K562 (cell line): ENCODE measurements at regions of chr2 and their contacts with region 1.

Region 1: DNA sequence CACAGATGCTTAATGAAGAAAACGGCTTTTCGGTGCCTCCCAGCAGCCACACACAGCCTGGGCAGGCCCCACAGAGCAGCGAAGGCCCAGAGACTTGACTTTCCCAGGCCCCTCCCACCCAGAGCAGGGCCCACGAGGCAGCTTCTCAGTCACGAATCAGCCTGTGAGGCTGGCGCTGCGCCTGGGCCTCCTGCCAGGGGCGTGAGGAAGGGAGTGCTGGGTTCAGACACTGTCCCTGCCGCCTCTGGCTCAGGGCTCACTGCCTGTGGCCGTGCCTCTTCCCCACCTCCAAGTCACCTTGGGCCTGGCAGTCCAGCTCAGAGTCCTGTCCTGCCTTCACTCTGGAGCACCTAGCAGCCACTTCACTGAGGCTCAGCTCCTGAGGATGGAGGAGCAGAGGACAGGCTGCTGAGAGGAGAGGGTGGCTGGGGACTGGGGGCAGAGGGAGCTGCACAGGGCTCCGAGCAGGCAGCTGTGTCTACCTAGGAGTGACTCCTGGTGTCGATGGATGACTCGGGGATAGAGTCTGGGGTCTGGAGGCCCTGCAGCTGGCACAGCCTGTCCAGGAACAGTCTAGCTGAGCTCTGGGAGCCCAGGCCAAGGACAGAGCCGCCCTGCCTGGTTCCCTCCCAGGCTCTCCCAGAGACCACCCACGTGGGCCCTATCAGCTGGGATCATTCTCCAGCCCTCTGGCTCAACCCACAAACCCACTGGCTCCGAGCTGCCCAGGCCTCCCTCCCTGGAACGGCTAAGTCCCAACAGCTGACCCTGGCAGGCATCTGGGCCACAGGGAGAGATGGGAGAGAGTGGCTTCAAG is 36.4 kb upstream of the FOSL2 start:
- DNase-seq: peak; percentile 58 to 67 (median 61)
- ATAC-seq: peak; percentile 40
- H3K4me3 ChIP-seq: no peak overlapping the region
- H3K27ac ChIP-seq: peak overlapping the region; percentile 62; the same call in 2 of the 3 replicates
- H3K4me1 ChIP-seq: peaks cover 57 to 66% of the 10 kb centered on the region in 2 experiments
- H3K27me3 ChIP-seq: no peaks in the 10 kb centered on the region
- CTCF ChIP-seq: no peak
- EP300 ChIP-seq: no peak
- POLR2A ChIP-seq: no peak
- RAD21 ChIP-seq: no peak

Region 2: DNA sequence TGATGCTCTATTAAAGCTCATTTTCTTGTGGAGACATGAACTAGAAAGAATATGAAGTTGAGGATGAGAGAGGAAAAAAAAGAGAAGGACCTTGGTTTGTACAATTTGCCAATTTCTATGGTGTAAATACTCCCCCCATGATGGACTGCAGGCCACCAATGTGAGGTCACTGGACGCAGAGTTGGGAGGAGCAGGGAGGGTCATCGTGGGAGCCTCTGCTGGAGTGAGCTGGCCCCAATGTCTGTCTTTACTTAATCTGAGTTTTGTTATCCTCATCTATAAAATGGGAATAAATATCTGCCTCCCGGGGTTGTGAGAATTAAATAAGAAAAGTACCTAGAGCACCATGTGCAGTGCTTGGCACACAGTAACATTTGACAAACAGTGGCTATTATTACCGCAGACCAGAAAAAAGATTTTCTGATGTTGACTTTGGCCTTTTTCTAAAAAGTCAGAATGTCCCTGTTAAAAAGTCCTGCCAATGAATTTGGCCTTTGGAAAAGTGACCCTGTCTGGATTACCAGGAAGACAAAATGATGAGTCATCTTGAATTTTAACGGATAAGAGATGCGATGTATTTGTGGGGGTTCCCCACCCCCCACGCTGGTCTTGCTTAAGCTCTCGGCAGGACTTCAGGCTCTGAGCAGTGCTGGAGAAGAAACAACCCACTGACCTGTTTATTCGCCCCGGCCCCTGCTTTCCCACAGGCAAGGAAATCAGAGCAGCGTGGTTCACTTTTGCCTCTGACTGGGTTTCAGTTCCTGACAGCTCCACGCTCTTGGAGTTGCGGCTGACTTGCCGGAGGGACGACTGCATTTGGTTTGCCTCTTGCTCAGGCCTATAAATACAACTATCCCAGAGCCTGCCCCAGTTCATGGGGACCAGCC is 14.0 kb before region 1 on chr2:
- CTCF ChIA-PET with region 1: interaction called, 3 read pairs
- POLR2A ChIA-PET with region 1: interaction called, 10 read pairs
- in situ Hi-C with region 1: no loop called
- intact Hi-C with region 1: no loop called
- DNase-seq: peak; percentile 28 to 54 (median 46)
- ATAC-seq: peak; percentile 36
- H3K4me3 ChIP-seq: no peak overlapping the region
- H3K27ac ChIP-seq: no peak overlapping the region
- H3K4me1 ChIP-seq: peaks cover 18 to 24% of the 10 kb centered on the region in 2 experiments
- H3K27me3 ChIP-seq: no peaks in the 10 kb centered on the region
- CTCF ChIP-seq: no peak
- EP300 ChIP-seq: peak; percentile 34; the same call in 1 of the 2 replicates
- POLR2A ChIP-seq: no peak
- RAD21 ChIP-seq: no peak